ENCODE measurements at regions of chr16 and their contacts with region 1.

Region 1: DNA sequence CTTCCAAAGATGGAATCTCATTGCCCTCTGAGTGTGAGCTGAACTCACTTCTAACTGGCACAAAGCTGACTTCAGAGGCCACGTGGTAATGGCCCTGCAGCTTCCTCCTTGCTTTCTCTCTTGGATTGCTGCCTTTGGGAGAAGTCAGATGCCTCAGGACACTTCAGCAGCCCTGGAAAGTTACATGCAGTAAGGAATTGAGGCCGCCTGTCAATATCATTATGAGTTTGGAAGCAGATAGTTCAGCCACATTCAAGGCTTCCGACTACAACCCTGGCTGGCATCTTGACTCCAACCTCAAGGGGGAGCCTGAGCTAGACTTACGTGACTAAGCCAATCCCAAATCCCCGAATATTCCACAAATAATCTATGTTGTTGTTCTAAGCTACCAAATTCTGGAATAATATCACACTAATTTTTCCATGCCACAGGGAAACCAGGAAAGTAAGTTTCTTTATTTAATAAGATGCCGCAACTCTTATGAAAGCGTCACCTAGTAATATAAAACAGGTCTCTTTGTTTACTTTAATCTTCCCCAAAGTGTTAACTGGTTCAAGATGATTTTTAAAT is 13.6 kb downstream of the CEP20 start:
- DNase-seq: peak; percentile 39 to 57
- H3K4me3 ChIP-seq: no peak overlapping the region
- H3K27ac ChIP-seq: peak overlapping the region; percentile 27
- H3K4me1 ChIP-seq: peaks cover 24% of the 10 kb centered on the region
- H3K27me3 ChIP-seq: no peaks in the 10 kb centered on the region
- CTCF ChIP-seq: peak; percentile 81

Region 2: GRCh38 chr16:15888072-15888976 is 13.5 kb after region 1 on chr16 and contains the start of gene CEP20:
- CTCF ChIA-PET with region 1: interaction called, 13 read pairs
- POLR2A ChIA-PET with region 1: interaction called, 13 read pairs
- intact Hi-C with region 1: no loop called
- DNase-seq: peak; percentile 97 to 100
- H3K4me3 ChIP-seq: peak within 1 kb of the TSS; percentile 90
- H3K27ac ChIP-seq: peak within 1 kb of the TSS; percentile 65
- H3K4me1 ChIP-seq: peaks cover 30% of the 10 kb centered on the region
- H3K27me3 ChIP-seq: no peaks in the 10 kb centered on the region
- CTCF ChIP-seq: no peak
- total RNA-seq, gene CEP20: 93.4 and 125 TPM in 2 replicates

Region 3: GRCh38 chr16:15949210-15950160 is 74.7 kb after region 1 on chr16 and contains the start of gene ABCC1:
- CTCF ChIA-PET with region 1: interaction called, 4 read pairs
- POLR2A ChIA-PET with region 1: interaction called, 3 read pairs
- intact Hi-C with region 1: loop called (anchors 2 kb)
- DNase-seq: peak in 1 of 2 experiments; percentile 51
- H3K4me3 ChIP-seq: peak within 1 kb of the TSS; percentile 96
- H3K27ac ChIP-seq: peak within 1 kb of the TSS; percentile 61
- H3K4me1 ChIP-seq: peaks cover 52% of the 10 kb centered on the region
- H3K27me3 ChIP-seq: no peaks in the 10 kb centered on the region
- CTCF ChIP-seq: no peak; the same call in 1 of the 2 replicates
- total RNA-seq, gene ABCC1: 139 and 146 TPM in 2 replicates

Region 4: GRCh38 chr16:16014329-16015144 is 139.7 kb after region 1 on chr16:
- CTCF ChIA-PET with region 1: interaction called, 4 read pairs
- POLR2A ChIA-PET with region 1: no interaction called
- intact Hi-C with region 1: loop called (anchors 5 kb)
- DNase-seq: peak; percentile 59 to 88
- H3K4me3 ChIP-seq: no peak overlapping the region
- H3K27ac ChIP-seq: peak overlapping the region; percentile 27
- H3K4me1 ChIP-seq: peaks cover 47% of the 10 kb centered on the region
- H3K27me3 ChIP-seq: no peaks in the 10 kb centered on the region
- CTCF ChIP-seq: no peak

Region 5: DNA sequence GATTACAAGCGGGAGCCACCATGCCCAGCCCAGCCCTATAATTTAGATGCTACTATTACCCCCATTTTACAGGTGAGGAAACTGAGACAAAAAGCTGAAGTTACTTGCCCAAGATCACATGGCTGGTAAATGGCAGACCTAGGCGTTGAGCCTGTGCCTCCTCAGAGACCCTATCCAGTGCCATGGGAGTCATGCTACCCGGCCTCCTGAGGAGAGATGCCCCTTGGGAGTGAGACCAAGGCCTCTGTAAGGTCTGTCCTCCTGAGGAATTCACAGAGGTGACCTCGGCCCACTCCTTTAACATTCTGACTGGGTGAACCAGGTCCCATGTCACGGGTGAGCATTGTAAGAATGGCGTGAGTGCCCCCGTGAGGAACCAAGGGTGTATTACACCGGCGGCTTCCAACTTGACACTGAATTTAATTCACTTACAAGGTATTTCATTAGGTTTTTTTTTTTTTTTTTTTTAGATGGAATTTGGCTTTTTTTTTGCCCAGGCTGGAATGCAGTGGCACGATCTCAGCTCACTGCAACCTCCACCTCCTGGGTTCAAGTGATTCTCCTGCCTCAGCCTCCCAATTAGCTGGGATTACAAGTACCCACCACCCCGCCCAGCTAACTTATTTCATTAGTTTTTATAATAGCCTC is 252.8 kb after region 1 on chr16:
- CTCF ChIA-PET with region 1: no interaction called
- POLR2A ChIA-PET with region 1: no interaction called
- intact Hi-C with region 1: loop called (anchors 1 kb)
- DNase-seq: peak; percentile 69 to 79
- H3K4me3 ChIP-seq: no peak overlapping the region
- H3K27ac ChIP-seq: no peak overlapping the region
- H3K4me1 ChIP-seq: no peaks in the 10 kb centered on the region
- H3K27me3 ChIP-seq: no peaks in the 10 kb centered on the region
- CTCF ChIP-seq: peak; percentile 93

Measured in PC-9 (cell line).